A549 (cell line): ENCODE measurements at regions of chr4 and their contacts with region 1.

Region 1: DNA sequence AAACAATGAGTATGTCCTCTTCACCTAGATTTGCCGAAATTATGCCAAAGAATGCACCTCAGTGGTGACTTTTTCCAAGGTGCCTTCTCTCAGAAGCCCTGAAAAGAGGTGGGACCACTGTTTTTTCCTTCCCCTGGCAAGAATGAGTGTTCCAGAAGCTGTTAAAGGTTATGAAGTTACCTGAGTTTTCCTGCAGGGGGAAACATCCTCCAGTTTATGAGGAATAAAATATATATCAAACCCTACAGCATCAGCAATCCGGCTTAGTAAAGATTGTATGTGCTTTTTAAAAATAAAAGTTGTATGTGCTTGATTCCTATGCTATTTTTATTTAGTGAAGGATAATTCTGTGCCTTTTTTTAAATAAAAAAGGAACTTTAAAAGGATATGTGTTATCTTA is 73.3 kb downstream of the RBM46 start:
- DNase-seq: peak in 1 of 2 experiments; percentile 20
- ATAC-seq: peak; percentile 54 to 80; a peak in 4 of 6 replicates
- H3K4me3 ChIP-seq: no peak overlapping the region
- H3K27ac ChIP-seq: no peak overlapping the region
- H3K4me1 ChIP-seq: no peaks in the 10 kb centered on the region
- CTCF ChIP-seq: peak; percentile 40
- EP300 ChIP-seq: no peak
- POLR2A ChIP-seq: no peak
- RAD21 ChIP-seq: peak; percentile 44 to 50; a peak in 4 of 5 replicates

Region 2: DNA sequence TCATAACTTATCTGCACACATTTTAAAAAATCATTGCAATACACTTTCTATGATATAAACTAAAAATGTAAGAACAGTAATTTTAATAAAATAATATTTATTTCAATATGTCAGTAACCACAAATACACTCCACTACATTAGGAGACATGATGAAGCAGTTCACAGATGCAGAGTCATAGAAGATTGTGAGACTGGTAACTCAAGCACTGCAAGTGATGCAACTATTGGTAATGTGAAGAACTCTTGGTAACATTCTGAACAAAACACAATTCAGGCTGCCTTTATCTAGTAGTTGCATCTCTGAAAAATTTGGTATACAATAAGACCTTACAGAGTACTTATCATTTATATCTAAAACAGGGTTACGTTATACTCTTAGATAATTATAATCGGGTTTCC is 163.1 kb before region 1 on chr4:
- CTCF ChIA-PET with region 1: no interaction called
- POLR2A ChIA-PET with region 1: no interaction called
- DNase-seq: no peak
- ATAC-seq: no peak
- H3K4me3 ChIP-seq: no peak overlapping the region
- H3K27ac ChIP-seq: no peak overlapping the region
- H3K4me1 ChIP-seq: no peaks in the 10 kb centered on the region
- CTCF ChIP-seq: no peak
- EP300 ChIP-seq: no peak
- POLR2A ChIP-seq: no peak
- RAD21 ChIP-seq: no peak

Region 3: GRCh38 chr4:154908168-154908567 is 53.8 kb after region 1 on chr4:
- CTCF ChIA-PET with region 1: no interaction called
- POLR2A ChIA-PET with region 1: no interaction called
- DNase-seq: peak in 1 of 2 experiments; percentile 1
- ATAC-seq: no peak
- H3K4me3 ChIP-seq: no peak overlapping the region
- H3K27ac ChIP-seq: no peak overlapping the region
- H3K4me1 ChIP-seq: no peaks in the 10 kb centered on the region
- CTCF ChIP-seq: no peak
- EP300 ChIP-seq: no peak
- POLR2A ChIP-seq: no peak
- RAD21 ChIP-seq: no peak

Region 4: DNA sequence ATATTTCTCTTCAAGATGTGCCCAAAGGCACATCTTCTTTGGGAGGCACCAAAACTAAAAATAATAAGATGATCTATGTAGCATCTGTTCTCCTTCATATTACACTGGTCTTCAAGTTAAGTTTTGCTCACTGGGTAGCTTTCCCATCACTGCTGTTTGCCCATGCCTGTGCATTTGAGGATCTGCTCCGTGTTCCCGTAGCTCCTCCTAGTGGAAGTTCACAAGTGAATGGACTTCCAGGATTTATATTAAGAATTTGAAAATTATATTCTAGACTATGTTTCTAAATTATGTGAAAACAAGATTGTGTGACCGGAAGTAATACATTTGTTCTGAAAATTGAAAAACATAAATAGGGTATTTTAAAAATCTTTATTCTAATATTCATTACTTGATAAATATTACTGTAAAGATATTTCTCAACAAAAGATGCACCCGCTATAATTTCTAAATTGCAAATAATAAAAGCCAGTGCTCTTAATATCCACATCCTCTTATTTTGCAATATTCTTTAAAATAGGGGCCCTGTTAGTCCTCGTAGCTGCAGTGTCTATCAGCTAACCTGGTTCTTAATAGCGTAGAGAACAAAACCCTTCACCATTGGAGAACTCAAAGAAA is 74.4 kb after region 1 on chr4:
- CTCF ChIA-PET with region 1: interaction called, 12 read pairs
- POLR2A ChIA-PET with region 1: no interaction called
- DNase-seq: peak; percentile 10 to 45
- ATAC-seq: peak in 1 of 2 experiments; percentile 59; a peak in 2 of 6 replicates
- H3K4me3 ChIP-seq: no peak overlapping the region
- H3K27ac ChIP-seq: no peak overlapping the region
- H3K4me1 ChIP-seq: no peaks in the 10 kb centered on the region
- CTCF ChIP-seq: peak; percentile 50
- EP300 ChIP-seq: no peak
- POLR2A ChIP-seq: no peak
- RAD21 ChIP-seq: peak; percentile 49 to 68